T-cell (primary cell): ENCODE measurements at regions of chr3 and their contacts with region 1.

Region 1: GRCh38 chr3:51538459-51539290 is at the start of gene RAD54L2:
- DNase-seq: peak; percentile 39 to 87 (median 66)
- ATAC-seq: peak; percentile 93 to 98 (median 96)
- H3K4me3 ChIP-seq: peak within 1 kb of the TSS; percentile 80 to 89
- H3K4me3 Mint-ChIP-seq: peak within 1 kb of the TSS; percentile 82 to 92 (median 91)
- H3K27ac ChIP-seq: peak within 1 kb of the TSS; percentile 81
- H3K27ac Mint-ChIP-seq: peak within 1 kb of the TSS; percentile 92 to 97
- H3K4me1 ChIP-seq: peaks cover 11 to 27% of the 10 kb centered on the region in 2 experiments
- H3K4me1 Mint-ChIP-seq: peaks cover 42 to 49% (median 43%) of the 10 kb centered on the region in 3 donors
- H3K27me3 ChIP-seq: no peaks in the 10 kb centered on the region
- H3K27me3 Mint-ChIP-seq: no peaks in the 10 kb centered on the region
- total RNA-seq, gene RAD54L2: 35.9 to 42.8 (median 39.7) TPM

Region 2: DNA sequence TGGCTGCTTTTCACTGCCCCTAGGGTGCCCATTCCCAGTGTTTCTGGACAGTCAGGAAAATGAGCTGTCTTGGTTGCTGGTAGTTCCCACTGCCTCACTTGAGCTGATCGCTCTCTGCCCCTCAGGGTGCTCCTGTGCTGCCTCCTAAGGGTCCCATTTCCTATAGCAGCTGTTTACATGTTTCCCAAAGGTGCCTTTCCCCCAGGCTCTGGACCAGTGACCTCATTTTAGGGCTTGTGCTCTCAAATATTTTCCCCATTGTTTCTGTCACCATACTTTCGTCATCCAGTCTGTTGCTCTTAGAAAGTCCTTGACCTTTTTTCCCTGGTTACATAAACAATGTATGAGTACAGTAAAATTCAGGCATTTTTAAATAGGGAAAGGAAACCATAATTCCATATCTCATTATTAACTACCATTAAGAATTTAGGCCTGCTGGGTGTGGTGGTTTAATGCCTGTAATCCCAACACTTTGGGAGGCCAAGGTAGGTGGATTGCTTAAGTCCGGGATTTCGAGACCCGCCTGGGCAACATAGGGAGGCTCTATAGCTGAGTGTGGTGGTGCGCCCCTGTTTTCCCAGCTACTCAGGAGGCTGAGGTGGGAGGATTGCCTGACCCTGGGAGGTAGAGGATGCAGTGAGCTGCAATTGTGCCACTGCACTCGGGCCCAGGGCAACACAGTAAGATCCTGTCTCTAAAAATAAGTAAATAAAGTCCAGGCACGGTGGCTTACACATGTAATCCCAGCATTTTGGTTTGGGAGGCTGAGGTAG is 11.6 kb after region 1 on chr3:
- CTCF ChIA-PET with region 1: no interaction called
- POLR2A ChIA-PET with region 1: interaction called in 1 of 2 experiments, 11 read pairs
- DNase-seq: no peak
- ATAC-seq: no peak
- H3K4me3 ChIP-seq: no peak overlapping the region
- H3K4me3 Mint-ChIP-seq: no peak overlapping the region
- H3K27ac ChIP-seq: no peak overlapping the region
- H3K27ac Mint-ChIP-seq: no peak overlapping the region
- H3K4me1 ChIP-seq: no peaks in the 10 kb centered on the region
- H3K4me1 Mint-ChIP-seq: peaks cover 0 to 5% (median 3%) of the 10 kb centered on the region in 3 donors
- H3K27me3 ChIP-seq: no peaks in the 10 kb centered on the region
- H3K27me3 Mint-ChIP-seq: no peaks in the 10 kb centered on the region

Region 3: GRCh38 chr3:51682079-51682478 is 143.4 kb after region 1 on chr3:
- CTCF ChIA-PET with region 1: interaction called in 1 of 2 experiments, 10 read pairs
- POLR2A ChIA-PET with region 1: no interaction called
- DNase-seq: peak; percentile 45 to 91 (median 70)
- ATAC-seq: peak; percentile 69 to 79 (median 73)
- H3K4me3 ChIP-seq: peak overlapping the region; percentile 25 to 46
- H3K4me3 Mint-ChIP-seq: peak overlapping the region; percentile 55 to 92 (median 58)
- H3K27ac ChIP-seq: peak overlapping the region; percentile 58
- H3K27ac Mint-ChIP-seq: peak overlapping the region; percentile 78 to 79
- H3K4me1 ChIP-seq: peaks cover 67 to 99% of the 10 kb centered on the region in 2 experiments
- H3K4me1 Mint-ChIP-seq: peaks cover 94 to 97% (median 96%) of the 10 kb centered on the region in 3 donors
- H3K27me3 ChIP-seq: no peaks in the 10 kb centered on the region
- H3K27me3 Mint-ChIP-seq: no peaks in the 10 kb centered on the region

Region 4: DNA sequence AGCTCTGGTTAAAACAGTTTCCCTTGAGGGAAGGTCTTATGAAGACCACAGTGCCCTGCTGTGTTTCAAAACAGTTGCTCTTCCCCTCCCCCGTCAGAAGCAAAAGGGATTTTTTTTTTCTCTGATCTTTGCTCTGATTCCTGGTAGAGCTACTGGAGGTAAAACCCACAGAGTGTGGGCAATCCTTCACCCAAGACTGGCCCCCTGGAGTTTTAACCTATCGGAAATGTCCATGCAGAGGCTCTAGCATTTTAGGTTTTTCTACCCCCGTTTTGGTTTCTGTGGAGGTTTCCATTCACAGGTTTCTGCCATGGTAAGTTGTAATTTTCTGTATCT is 195.9 kb after region 1 on chr3:
- CTCF ChIA-PET with region 1: interaction called in 1 of 2 experiments, 12 read pairs
- POLR2A ChIA-PET with region 1: no interaction called
- DNase-seq: peak in 1 of 35 experiments; percentile 9
- ATAC-seq: no peak
- H3K4me3 ChIP-seq: no peak overlapping the region
- H3K4me3 Mint-ChIP-seq: no peak overlapping the region
- H3K27ac ChIP-seq: no peak overlapping the region
- H3K27ac Mint-ChIP-seq: no peak overlapping the region
- H3K4me1 ChIP-seq: peaks cover 0 to 4% of the 10 kb centered on the region in 2 experiments
- H3K4me1 Mint-ChIP-seq: peaks cover 7 to 16% (median 10%) of the 10 kb centered on the region in 3 donors
- H3K27me3 ChIP-seq: peaks cover 0 to 6% of the 10 kb centered on the region in 2 experiments
- H3K27me3 Mint-ChIP-seq: peaks cover 5 to 29% of the 10 kb centered on the region in 2 donors